ENCODE measurements at regions of chr20 and their contacts with region 1.

Region 1: DNA sequence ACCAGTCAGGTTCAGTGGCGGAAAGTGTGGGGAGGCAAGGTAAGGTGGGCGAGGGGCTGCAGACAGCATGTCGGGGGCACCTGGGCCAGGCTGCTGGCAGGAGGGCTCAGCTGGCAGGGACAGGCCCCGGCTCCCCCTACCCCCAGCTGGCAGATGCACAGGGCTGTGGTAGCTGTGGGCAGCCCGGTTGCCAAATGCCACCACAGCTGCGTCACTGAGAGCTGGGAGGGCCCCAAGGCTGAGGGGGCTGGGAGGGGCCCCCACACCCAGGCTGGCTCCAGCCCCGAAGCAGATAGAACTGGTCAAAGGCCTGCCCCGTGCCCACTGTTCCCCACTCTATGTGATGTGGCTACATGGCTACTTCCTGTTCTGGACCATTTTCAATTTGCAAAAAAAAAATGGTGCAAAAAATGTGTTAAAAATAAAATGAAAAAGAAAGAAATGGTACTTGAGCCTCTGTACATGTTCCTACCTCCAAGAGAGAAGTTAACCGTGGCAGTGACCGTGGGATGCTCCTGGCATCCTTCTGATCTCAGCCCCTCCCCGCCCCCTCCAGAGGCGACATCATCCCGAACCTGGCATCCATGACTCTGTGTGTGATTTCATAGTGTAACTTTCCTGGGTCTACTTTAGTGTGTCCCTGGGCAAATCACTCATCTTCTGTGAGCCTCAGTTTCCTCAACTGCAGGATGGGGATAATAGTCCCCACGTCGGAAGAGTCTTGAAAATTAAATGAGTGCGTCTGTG is 64.4 kb downstream of the UBE2V1 start:
- DNase-seq: peak; percentile 48
- ATAC-seq: peak; percentile 71
- H3K4me3 ChIP-seq: no peak overlapping the region
- H3K4me3 Mint-ChIP-seq: peak overlapping the region; percentile 53
- H3K27ac ChIP-seq: no peak overlapping the region
- H3K27ac Mint-ChIP-seq: peak overlapping the region; percentile 51
- H3K4me1 ChIP-seq: peaks cover 29 to 35% of the 10 kb centered on the region in 2 donors
- H3K4me1 Mint-ChIP-seq: peaks cover 29% of the 10 kb centered on the region
- H3K27me3 ChIP-seq: no peaks in the 10 kb centered on the region
- H3K27me3 Mint-ChIP-seq: no peaks in the 10 kb centered on the region
- CTCF ChIP-seq: no peak

Region 2: DNA sequence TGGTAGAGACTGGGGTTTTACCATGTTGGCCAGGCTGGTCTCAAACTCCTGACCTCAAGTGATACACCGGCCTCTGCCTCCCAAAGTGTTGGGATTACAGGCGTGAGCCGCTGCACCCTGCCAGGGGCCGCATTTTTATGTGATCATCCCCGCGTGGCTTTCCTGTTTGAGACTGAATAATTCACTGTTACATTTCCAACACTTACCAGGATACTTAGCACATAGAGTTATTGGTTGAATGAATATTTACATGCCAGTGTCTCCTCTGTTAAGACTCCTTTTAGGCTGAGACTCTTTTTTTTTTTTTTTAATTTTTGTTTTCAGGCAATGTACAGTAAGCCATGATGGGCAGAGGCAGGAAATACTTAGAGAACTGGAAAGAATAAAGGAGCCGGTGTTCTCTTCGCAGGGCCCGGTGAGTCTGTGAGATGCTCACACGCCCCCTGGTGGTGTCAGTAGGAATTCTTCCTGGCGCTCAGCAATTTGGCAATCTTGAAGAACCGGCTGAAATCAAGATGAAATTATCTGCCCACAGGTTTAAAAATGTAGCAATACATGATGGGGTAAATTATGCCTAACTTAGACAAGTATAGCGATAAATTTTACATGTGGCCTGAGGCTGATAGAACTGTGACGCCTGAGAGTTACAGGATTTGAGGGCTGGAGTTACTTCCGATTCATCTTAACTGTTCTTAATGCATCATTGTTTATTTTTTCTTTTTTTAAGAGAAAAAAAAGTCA is 120.0 kb before region 1 on chr20:
- CTCF ChIA-PET with region 1: no interaction called
- POLR2A ChIA-PET with region 1: no interaction called
- intact Hi-C with region 1: no loop called
- DNase-seq: peak; percentile 81
- ATAC-seq: peak; percentile 91
- H3K4me3 ChIP-seq: no peak overlapping the region
- H3K4me3 Mint-ChIP-seq: no peak overlapping the region
- H3K27ac ChIP-seq: no peak overlapping the region
- H3K27ac Mint-ChIP-seq: peak overlapping the region; percentile 15
- H3K4me1 ChIP-seq: no peaks in the 10 kb centered on the region
- H3K4me1 Mint-ChIP-seq: peaks cover 4% of the 10 kb centered on the region
- H3K27me3 ChIP-seq: no peaks in the 10 kb centered on the region
- H3K27me3 Mint-ChIP-seq: peaks cover 9% of the 10 kb centered on the region
- CTCF ChIP-seq: peak; percentile 95

Region 3: DNA sequence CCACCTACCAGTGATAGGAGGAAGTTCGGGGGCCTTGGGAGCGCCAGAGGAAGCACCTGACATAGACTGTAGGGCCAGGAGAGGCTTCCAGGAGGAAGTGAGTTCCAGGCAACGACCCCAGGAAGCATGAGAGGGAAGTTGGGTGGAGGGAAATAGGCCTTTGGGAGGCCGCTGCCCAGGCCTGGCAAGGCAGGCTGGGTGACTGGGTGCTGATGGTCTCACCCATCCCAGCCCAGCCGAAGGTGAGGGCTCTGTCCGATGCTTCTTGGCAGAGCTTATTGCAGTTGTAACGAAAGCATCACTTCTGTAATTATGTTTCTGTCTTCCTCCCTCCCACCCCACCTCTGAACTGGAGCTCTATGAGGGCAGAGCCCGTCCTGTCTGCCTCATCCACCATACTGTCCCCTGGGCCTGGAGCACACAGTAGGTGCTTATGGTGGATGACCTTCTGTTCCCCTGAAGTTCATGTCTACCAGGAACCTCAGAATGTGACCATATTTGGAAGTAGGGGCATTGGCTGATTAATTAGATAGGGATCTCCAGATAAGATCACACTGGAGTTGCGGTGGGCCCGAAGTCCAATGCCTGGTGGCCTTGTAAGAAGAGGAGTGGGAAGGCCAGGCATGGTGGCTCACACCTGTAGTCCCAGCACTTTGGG is 10.3 kb after region 1 on chr20:
- CTCF ChIA-PET with region 1: no interaction called
- POLR2A ChIA-PET with region 1: interaction called, 10 read pairs
- intact Hi-C with region 1: no loop called
- DNase-seq: no peak
- ATAC-seq: no peak
- H3K4me3 ChIP-seq: no peak overlapping the region
- H3K4me3 Mint-ChIP-seq: no peak overlapping the region
- H3K27ac ChIP-seq: no peak overlapping the region
- H3K27ac Mint-ChIP-seq: no peak overlapping the region
- H3K4me1 ChIP-seq: peaks cover 0 to 7% of the 10 kb centered on the region in 2 donors
- H3K4me1 Mint-ChIP-seq: peaks cover 8% of the 10 kb centered on the region
- H3K27me3 ChIP-seq: no peaks in the 10 kb centered on the region
- H3K27me3 Mint-ChIP-seq: no peaks in the 10 kb centered on the region
- CTCF ChIP-seq: no peak

Region 4: GRCh38 chr20:50308513-50309279 is 260.1 kb after region 1 on chr20:
- CTCF ChIA-PET with region 1: no interaction called
- POLR2A ChIA-PET with region 1: no interaction called
- intact Hi-C with region 1: no loop called
- DNase-seq: no peak
- ATAC-seq: no peak
- H3K4me3 ChIP-seq: no peak overlapping the region
- H3K4me3 Mint-ChIP-seq: no peak overlapping the region
- H3K27ac ChIP-seq: no peak overlapping the region
- H3K27ac Mint-ChIP-seq: no peak overlapping the region
- H3K4me1 ChIP-seq: no peaks in the 10 kb centered on the region
- H3K4me1 Mint-ChIP-seq: no peaks in the 10 kb centered on the region
- H3K27me3 ChIP-seq: peaks cover 0 to 2% (median 0%) of the 10 kb centered on the region in 4 experiments
- H3K27me3 Mint-ChIP-seq: peaks cover 19% of the 10 kb centered on the region
- CTCF ChIP-seq: no peak

Measured in B cell (primary cell).